ENCODE measurements at regions of chrX and their contacts with region 1.

Region 1: DNA sequence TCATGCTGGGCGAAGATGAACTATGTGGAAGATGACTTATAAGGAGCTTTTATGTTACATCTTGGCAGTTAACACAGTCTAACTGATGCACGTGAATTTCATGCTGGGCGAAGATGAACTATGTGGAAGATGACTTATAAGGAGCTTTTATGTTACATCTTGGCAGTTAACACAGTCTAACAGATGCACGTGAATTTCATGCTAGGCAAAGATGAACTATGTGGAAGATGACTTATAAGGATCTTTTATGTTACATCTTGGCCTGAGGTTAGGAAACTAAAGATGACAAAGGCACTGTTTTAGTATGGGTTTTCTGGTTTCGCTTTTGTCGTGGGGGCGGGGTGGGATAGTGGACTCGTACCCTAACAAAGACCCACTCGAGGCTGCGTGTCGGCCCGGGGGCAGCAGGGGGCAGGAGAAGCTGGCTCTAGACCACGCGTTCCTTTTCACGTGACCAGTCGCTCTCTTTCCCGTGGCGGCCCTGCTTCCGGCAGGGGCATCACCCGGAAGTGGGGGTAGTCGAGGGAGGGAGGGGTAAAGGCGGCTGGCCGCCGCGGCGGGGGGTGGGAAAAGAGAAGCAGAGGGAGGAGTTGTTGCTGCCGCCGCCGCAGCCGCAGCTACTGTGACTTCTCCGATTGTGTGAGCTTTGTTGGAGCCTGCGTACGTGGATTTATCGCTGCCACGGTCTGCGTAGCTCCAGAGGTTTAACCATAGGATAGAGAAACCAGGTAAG is at the start of gene ATP7A:
- DNase-seq: peak; percentile 54
- ATAC-seq: peak; percentile 91
- H3K4me3 ChIP-seq: peak within 1 kb of the TSS; percentile 67 to 73
- H3K27ac ChIP-seq: peak within 1 kb of the TSS; percentile 38; the same call in 1 of the 2 replicates
- H3K4me1 ChIP-seq: no peaks in the 10 kb centered on the region
- H3K27me3 ChIP-seq: no peaks in the 10 kb centered on the region
- CTCF ChIP-seq: peak; percentile 26 to 52 (median 39); a peak in 5 of 6 replicates
- POLR2A ChIP-seq: no peak
- RAD21 ChIP-seq: peak; percentile 61
- total RNA-seq, gene ATP7A: 6.3 TPM

Region 2: GRCh38 chrX:78024349-78025108 is 114.3 kb after region 1 on chrX:
- CTCF ChIA-PET with region 1: interaction called, 4 read pairs
- POLR2A ChIA-PET with region 1: interaction called, 3 read pairs
- RAD21 ChIA-PET with region 1: interaction called, 3 to 5 read pairs
- intact Hi-C with region 1: loop called (anchors 2 kb)
- DNase-seq: peak; percentile 43
- ATAC-seq: peak; percentile 97
- H3K4me3 ChIP-seq: no peak overlapping the region
- H3K27ac ChIP-seq: peak overlapping the region; percentile 33; the same call in 1 of the 2 replicates
- H3K4me1 ChIP-seq: peaks cover 7 to 12% of the 10 kb centered on the region in 2 experiments; a peak in 3 of 4 replicates
- H3K27me3 ChIP-seq: no peaks in the 10 kb centered on the region
- CTCF ChIP-seq: peak; percentile 41 to 74 (median 46); a peak in 4 of 6 replicates
- POLR2A ChIP-seq: no peak
- RAD21 ChIP-seq: peak; percentile 73